Activated T-helper 1 cell treated with anti-CD3 and anti-CD28 coated beads, Interleukin-12 subunit alpha, Interleukin-12 subunit beta, Interleukin-2, Interleukin-4 antibody, amounts not matched to agents 30 ng/mL and 10 ng/mL and 1 ng/mL, durations not matched to agents 14 hours and 24 hours and 36 hours (primary cell): ENCODE measurements at regions of chr13 and their contacts with region 1.

Region 1: GRCh38 chr13:112606109-112607001 is 18.4 kb upstream of the TUBGCP3 start:
- DNase-seq: peak; percentile 86
- H3K4me3 Mint-ChIP-seq: peak overlapping the region; percentile 84
- H3K27ac Mint-ChIP-seq: no peak overlapping the region
- H3K4me1 Mint-ChIP-seq: peaks cover 8% of the 10 kb centered on the region
- H3K27me3 Mint-ChIP-seq: peaks cover 28% of the 10 kb centered on the region

Region 2: GRCh38 chr13:112072531-112073244 is 533.7 kb before region 1 on chr13:
- intact Hi-C with region 1: loop called (anchors 5 kb)
- DNase-seq: no peak
- H3K4me3 Mint-ChIP-seq: no peak overlapping the region
- H3K27ac Mint-ChIP-seq: no peak overlapping the region
- H3K4me1 Mint-ChIP-seq: peaks cover 5% of the 10 kb centered on the region
- H3K27me3 Mint-ChIP-seq: peaks cover 68% of the 10 kb centered on the region

Region 3: GRCh38 chr13:112333756-112334543 is 272.4 kb before region 1 on chr13:
- intact Hi-C with region 1: loop called (anchors 10 kb)
- DNase-seq: no peak
- H3K4me3 Mint-ChIP-seq: no peak overlapping the region
- H3K27ac Mint-ChIP-seq: no peak overlapping the region
- H3K4me1 Mint-ChIP-seq: no peaks in the 10 kb centered on the region
- H3K27me3 Mint-ChIP-seq: peaks cover 14% of the 10 kb centered on the region

Region 4: DNA sequence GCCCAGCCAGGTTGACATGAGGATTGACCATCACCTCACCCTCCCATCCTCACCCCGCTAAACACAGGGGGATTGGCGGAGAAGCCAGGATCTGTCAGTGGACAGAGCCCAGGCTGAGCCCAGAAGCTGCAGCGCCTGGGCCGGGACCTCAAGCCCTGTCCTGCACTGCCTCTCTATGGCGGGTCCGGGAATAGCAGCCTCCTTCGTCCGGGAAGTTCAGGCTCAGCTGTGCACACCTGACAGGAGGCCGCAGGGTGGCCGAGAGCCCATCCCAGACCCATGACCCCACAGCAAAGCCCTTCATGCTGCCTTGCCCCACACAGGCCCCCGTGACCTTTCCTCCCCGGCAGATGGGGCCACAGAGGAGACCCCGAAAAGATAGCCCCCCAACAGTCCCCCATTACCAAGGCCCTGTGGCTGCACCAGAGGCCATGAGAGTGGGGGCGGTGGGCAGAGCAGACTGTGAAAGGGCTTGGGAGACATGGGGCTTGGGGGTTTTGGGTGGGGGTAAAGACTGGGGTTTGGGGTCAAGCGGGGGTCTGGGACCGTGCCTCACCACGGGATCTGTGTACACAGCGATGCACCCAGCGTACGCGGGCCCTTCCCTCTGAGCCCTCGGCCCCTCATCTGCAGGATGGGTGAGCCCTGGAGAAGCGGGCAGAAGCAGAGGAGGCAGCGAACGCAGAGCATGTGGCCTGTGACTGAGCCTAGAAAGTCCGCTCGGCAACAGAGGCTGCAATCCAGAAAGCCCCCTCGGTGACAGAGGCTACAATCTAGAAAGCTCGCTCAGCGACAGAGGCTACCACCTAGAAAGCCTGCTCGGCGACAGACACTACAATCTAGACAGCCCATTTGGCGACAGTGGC is 162.1 kb before region 1 on chr13:
- intact Hi-C with region 1: loop called (anchors 1 kb)
- DNase-seq: peak; percentile 27
- H3K4me3 Mint-ChIP-seq: no peak overlapping the region
- H3K27ac Mint-ChIP-seq: no peak overlapping the region
- H3K4me1 Mint-ChIP-seq: no peaks in the 10 kb centered on the region
- H3K27me3 Mint-ChIP-seq: peaks cover 3% of the 10 kb centered on the region

Region 5: GRCh38 chr13:112756967-112757758 is 150.8 kb after region 1 on chr13:
- intact Hi-C with region 1: no loop called
- DNase-seq: no peak
- H3K4me3 Mint-ChIP-seq: no peak overlapping the region
- H3K27ac Mint-ChIP-seq: no peak overlapping the region
- H3K4me1 Mint-ChIP-seq: peaks cover 13% of the 10 kb centered on the region
- H3K27me3 Mint-ChIP-seq: no peaks in the 10 kb centered on the region

Region 6: GRCh38 chr13:113138792-113139551 is 532.6 kb after region 1 on chr13:
- intact Hi-C with region 1: no loop called
- DNase-seq: no peak
- H3K4me3 Mint-ChIP-seq: no peak overlapping the region
- H3K27ac Mint-ChIP-seq: no peak overlapping the region
- H3K4me1 Mint-ChIP-seq: no peaks in the 10 kb centered on the region
- H3K27me3 Mint-ChIP-seq: peaks cover 19% of the 10 kb centered on the region